Calu3 (cell line): ENCODE measurements at regions of chr3 and their contacts with region 1.

Region 1: DNA sequence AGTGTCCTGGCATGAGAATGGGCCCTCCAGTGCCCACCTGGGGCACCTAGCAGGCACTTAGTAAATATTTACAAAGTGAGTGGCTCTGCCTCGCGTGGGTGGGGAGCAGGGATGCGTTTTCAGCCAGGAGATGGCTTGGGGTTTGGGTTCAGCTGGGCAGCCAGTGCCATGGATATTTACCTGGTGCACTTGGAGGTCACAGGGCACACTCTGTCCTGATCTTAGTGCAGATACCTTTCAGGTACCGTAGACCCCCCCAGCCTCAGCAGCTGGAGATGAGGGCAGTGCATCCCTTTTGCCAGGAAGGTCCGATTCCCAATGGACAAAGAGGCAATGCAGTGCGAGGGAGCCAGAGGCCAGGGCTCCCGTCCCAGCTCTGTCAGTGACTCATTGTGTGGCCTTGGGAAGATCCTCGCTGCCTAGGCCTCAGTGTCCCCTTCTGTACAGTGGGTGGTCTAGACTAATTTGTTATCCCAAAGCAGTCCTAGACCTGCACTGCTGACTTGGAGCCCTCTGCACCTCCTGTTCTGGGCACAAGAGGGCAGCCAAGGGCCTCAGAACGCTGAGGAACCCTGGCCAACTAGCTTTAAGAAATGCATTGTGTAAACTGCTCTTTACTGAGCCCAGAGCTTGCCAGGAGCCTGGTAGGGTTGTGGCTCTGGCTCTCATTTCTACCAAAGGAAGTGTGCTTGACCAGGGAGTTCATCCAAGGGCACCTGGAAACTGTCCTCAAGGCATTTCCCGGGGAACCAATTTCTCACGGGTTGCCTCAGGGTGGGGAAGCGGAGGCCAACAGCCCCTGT is 16.0 kb downstream of the HDAC11 start:
- DNase-seq: peak; percentile 76
- H3K4me3 Mint-ChIP-seq: no peak overlapping the region
- H3K27ac Mint-ChIP-seq: no peak overlapping the region
- H3K4me1 Mint-ChIP-seq: no peaks in the 10 kb centered on the region
- H3K27me3 Mint-ChIP-seq: no peaks in the 10 kb centered on the region
- CTCF ChIP-seq: peak; percentile 84

Region 2: GRCh38 chr3:12560505-12561190 is 935.5 kb before region 1 on chr3:
- CTCF ChIA-PET with region 1: no interaction called
- intact Hi-C with region 1: no loop called
- DNase-seq: no peak
- H3K4me3 Mint-ChIP-seq: no peak overlapping the region
- H3K27ac Mint-ChIP-seq: no peak overlapping the region
- H3K4me1 Mint-ChIP-seq: peaks cover 26% of the 10 kb centered on the region
- H3K27me3 Mint-ChIP-seq: no peaks in the 10 kb centered on the region
- CTCF ChIP-seq: no peak

Region 3: DNA sequence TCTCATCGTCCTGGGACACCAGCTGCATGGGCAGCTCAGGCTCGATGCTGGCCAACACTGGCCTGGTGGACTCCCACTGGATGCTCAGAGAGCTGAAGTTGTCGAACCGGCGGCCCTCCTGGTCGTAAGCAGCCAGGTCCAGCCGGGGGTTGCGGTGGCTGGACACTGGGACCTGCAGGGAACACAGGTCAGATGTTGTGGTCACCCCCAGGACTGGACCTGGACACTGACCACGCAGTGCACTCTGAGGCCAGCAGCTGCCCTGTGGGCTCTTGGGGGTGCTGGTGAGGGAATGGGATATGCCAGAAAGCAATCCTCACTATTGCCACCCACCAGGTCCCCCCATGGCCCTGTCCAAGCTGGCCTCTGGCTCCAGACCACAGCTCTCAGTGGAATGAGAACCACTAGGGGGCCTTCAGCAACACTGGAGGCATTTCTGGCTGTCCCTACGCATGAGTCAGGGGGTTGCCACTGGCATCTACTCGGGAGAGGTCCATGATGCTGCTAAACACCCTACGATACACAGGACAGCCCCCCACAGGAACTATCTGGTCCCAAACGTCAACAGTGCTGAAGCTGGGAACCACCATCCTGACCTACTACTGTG is 142.1 kb before region 1 on chr3:
- CTCF ChIA-PET with region 1: no interaction called
- intact Hi-C with region 1: no loop called
- DNase-seq: no peak
- H3K4me3 Mint-ChIP-seq: no peak overlapping the region
- H3K27ac Mint-ChIP-seq: no peak overlapping the region
- H3K4me1 Mint-ChIP-seq: peaks cover 10% of the 10 kb centered on the region
- H3K27me3 Mint-ChIP-seq: no peaks in the 10 kb centered on the region
- CTCF ChIP-seq: no peak

Region 4: GRCh38 chr3:13461169-13462158 is 34.7 kb before region 1 on chr3:
- CTCF ChIA-PET with region 1: no interaction called
- intact Hi-C with region 1: no loop called
- DNase-seq: peak; percentile 83
- H3K4me3 Mint-ChIP-seq: no peak overlapping the region
- H3K27ac Mint-ChIP-seq: no peak overlapping the region
- H3K4me1 Mint-ChIP-seq: no peaks in the 10 kb centered on the region
- H3K27me3 Mint-ChIP-seq: peaks cover 53% of the 10 kb centered on the region
- CTCF ChIP-seq: peak; percentile 74

Region 5: DNA sequence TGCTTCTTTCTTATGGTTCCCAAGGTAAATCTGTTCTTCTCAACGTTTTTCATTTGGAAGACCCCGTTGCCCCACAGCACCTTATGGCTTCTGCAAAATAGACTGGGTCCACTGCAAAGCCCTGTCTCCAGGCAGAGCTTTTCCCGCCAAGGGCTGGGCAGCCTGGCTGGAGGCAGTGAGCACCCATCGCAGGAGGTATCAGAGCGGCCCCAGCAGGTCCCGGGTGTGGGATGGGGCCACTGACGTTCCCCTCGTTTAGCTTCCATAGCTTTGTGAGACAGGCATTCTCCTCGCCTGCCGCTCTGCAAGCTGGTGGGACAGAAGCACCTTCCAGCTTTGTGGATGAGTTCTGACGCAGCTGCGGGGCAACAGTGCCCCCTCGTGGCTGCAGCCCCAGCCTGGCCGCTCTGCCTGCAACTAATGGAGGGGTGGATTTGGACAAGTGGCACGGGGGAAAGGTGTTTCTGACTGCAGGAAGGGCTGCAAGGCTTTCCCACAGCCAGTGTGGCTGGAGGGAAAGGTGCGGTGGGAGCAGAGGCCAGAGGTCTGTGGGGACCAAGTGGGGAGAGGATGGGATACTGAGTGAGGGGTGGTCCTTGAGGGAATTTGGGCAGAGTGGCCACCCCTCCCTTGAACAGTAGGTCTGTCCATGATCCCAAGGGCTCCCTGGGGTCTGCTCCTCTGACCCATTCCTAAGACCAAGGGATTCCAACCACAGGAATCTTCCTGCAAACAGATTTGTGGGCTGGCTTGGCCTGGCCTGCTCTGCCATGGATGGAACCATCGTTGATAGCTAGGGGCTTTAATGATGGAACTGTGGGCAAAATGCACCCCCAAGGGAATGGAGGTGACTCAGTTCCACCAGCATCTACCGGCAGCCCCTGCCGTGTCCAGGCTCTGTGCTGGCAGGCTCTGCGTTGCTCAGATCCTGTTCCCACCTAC is 152.2 kb after region 1 on chr3:
- CTCF ChIA-PET with region 1: interaction called, 111 read pairs
- intact Hi-C with region 1: loop called (anchors 1 kb)
- DNase-seq: peak; percentile 89
- H3K4me3 Mint-ChIP-seq: no peak overlapping the region
- H3K27ac Mint-ChIP-seq: no peak overlapping the region
- H3K4me1 Mint-ChIP-seq: peaks cover 7% of the 10 kb centered on the region
- H3K27me3 Mint-ChIP-seq: peaks cover 63% of the 10 kb centered on the region
- CTCF ChIP-seq: peak; percentile 90

Region 6: GRCh38 chr3:13839726-13840320 is 343.7 kb after region 1 on chr3:
- CTCF ChIA-PET with region 1: no interaction called
- intact Hi-C with region 1: no loop called
- DNase-seq: no peak
- H3K4me3 Mint-ChIP-seq: no peak overlapping the region
- H3K27ac Mint-ChIP-seq: no peak overlapping the region
- H3K4me1 Mint-ChIP-seq: no peaks in the 10 kb centered on the region
- H3K27me3 Mint-ChIP-seq: peaks cover 8% of the 10 kb centered on the region
- CTCF ChIP-seq: no peak